ENCODE measurements at regions of chr1 and their contacts with region 1.

Region 1: DNA sequence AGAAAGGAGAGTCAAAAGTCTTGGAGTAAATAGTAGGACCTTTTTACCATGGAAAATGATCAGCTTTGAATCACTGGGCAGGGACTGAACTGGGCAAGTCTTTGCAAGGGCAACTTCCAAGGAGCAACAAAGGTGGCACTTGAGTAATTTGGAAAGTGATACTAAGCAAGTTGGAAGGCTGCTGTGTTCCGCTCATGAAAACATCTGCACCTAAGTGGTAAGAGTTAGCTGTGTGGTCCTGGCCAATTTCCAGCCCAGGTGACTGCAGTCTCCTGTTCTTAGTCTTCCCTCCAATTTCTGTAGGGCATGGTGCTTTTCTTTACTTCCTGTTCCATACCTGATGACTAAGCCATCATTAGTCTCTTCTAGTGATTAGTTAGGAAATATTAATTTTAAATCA is 35.5 kb upstream of the PRDM2 start:
- DNase-seq: no peak
- H3K4me3 ChIP-seq: no peak overlapping the region
- H3K27me3 ChIP-seq: no peaks in the 10 kb centered on the region
- CTCF ChIP-seq: no peak

Region 2: DNA sequence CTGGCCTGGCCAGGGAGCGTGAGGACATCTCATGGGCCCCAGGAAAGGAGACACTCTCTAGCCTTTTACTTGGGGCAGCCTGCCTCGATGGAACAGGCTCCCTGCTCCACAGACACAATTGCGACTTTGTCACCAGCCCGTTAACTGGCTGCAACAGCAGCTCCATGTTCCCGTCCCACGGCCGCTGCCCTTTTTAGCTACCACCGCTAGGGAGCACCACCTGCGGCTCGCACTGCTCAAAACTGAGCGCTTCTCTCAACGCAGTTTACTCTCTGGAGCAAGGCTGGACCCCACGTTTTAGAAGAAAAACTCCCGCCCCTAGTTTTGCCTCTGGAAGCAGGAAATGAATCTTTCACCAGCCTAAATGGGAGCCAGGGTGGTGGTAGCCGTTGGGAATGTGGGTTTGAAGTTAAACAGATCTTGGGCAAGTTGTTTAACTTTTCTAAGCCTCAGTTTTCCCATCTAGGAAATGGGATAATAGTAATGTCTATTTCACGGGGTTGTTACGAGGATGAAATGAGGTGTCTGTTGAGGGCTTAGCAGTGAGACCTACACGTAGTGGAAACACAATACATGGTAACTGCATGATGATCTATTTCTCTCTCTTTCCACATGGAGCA is 147.1 kb before region 1 on chr1:
- CTCF ChIA-PET with region 1: no interaction called
- POLR2A ChIA-PET with region 1: no interaction called
- DNase-seq: no peak
- H3K4me3 ChIP-seq: no peak overlapping the region
- H3K27me3 ChIP-seq: no peaks in the 10 kb centered on the region
- CTCF ChIP-seq: no peak

Region 3: DNA sequence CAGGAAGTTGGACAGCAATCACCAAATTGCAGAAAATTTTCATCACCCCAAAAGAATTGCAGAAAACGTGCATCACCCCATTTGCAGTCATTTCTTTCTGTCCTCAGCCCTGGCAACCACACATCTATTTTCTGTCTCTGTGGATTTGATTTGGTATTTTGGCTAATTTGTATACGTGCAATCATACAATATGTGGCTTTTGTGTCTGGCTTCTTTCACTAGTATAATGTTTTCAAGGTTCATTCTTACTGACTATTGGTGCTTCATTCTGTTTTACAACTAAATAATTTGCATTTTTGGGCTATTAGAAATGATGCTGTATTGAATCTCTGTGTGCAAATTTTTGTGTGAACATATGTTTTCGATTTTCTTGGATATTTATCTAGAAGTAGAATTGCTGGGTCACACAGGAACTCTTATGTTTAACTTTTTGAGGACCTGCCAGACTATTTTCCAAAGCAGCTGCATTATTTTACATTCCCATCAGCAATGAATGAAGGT is 10.8 kb after region 1 on chr1:
- CTCF ChIA-PET with region 1: interaction called, 14 read pairs
- POLR2A ChIA-PET with region 1: no interaction called
- DNase-seq: peak; percentile 61
- H3K4me3 ChIP-seq: no peak overlapping the region
- H3K27me3 ChIP-seq: no peaks in the 10 kb centered on the region
- CTCF ChIP-seq: no peak

Region 4: GRCh38 chr1:13725714-13726175 is 61.3 kb after region 1 on chr1:
- CTCF ChIA-PET with region 1: interaction called, 11 read pairs
- POLR2A ChIA-PET with region 1: no interaction called
- DNase-seq: no peak
- H3K4me3 ChIP-seq: no peak overlapping the region
- H3K27me3 ChIP-seq: no peaks in the 10 kb centered on the region
- CTCF ChIP-seq: peak; percentile 55

Region 5: DNA sequence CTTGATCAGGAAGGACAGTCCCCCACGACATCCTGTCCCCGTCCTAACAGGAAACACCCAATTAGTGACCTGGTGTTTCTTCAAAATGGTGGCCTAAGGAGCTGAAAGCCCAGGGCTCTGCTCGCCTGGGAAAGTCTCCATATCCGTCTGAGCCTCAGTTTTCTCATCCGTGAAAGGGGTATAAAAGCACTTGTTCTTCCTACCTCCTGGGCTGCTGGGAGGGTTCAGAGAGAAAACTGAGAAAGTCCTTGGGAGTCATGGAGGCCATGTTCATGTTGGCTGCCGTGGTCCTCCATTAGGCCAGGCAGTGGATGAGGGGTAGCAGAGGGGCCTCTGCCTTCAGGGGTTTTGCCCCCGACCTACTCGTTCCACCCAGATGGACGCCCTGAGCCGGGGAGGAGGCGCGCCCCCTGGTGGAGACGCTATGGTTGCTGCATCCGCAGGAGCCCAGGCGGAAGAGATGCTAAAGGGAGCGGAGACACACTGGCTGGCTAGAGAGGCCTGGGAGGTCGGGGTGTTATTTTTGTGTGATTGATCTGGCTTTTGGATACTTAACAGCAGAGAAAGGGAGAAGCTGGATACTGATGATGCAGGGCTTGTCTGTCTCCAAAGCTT is 149.1 kb after region 1 on chr1:
- CTCF ChIA-PET with region 1: interaction called, 12 read pairs
- POLR2A ChIA-PET with region 1: no interaction called
- DNase-seq: no peak
- H3K4me3 ChIP-seq: no peak overlapping the region
- H3K27me3 ChIP-seq: no peaks in the 10 kb centered on the region
- CTCF ChIP-seq: peak; percentile 74

Region 6: GRCh38 chr1:13825033-13825432 is 160.6 kb after region 1 on chr1:
- CTCF ChIA-PET with region 1: interaction called, 16 read pairs
- POLR2A ChIA-PET with region 1: no interaction called
- DNase-seq: no peak
- H3K4me3 ChIP-seq: no peak overlapping the region
- H3K27me3 ChIP-seq: no peaks in the 10 kb centered on the region
- CTCF ChIP-seq: 0 out of 2 replicates have a peak, but pooled peaks have one; percentile 30

Region 7: DNA sequence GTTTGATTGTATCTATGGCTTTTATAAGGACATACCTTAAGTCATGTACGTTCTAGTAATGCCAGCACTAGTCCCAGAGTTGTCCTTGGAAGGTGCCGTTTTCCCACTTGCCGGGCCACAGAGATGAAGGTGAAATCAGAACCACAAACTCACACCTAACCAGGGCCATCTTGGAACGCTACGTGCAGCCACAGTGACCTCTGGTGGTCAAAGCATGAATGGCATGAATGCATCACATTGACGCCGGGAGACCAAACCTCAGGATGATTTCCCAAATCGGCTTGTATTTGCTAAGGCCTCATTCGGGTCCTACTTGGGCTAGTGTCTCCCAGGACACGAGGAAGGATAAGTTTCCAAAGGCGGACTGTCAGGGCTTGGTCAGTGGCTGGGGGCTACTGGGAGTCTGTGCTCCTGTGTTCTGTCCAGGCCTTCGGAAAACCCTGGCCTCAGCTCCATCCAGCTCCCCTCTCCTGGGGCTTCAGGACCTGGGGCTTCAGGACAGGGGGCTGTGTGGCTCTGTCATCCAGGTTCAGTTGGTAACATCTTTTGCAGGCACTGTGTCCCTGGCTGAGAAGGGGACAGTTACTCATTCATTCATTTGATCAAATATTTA is 296.0 kb after region 1 on chr1:
- CTCF ChIA-PET with region 1: interaction called, 13 read pairs
- POLR2A ChIA-PET with region 1: no interaction called
- DNase-seq: peak; percentile 2
- H3K4me3 ChIP-seq: no peak overlapping the region
- H3K27me3 ChIP-seq: no peaks in the 10 kb centered on the region
- CTCF ChIP-seq: peak; percentile 96